Posterior vena cava (tissue), 2 donors: ENCODE measurements at regions of chr3 and their contacts with region 1.

Region 1: GRCh38 chr3:130088061-130088460 is 6.4 kb downstream of the ALG1L2 start:
- DNase-seq: peak; percentile 7

Region 2: GRCh38 chr3:130044370-130044769 is 43.7 kb before region 1 on chr3:
- intact Hi-C with region 1: loop called in 1 of 2 experiments (anchors 5 kb)
- DNase-seq: no peak